Ovary (tissue), 10 donors: ENCODE measurements at regions of chr2 and their contacts with region 1.

Region 1: DNA sequence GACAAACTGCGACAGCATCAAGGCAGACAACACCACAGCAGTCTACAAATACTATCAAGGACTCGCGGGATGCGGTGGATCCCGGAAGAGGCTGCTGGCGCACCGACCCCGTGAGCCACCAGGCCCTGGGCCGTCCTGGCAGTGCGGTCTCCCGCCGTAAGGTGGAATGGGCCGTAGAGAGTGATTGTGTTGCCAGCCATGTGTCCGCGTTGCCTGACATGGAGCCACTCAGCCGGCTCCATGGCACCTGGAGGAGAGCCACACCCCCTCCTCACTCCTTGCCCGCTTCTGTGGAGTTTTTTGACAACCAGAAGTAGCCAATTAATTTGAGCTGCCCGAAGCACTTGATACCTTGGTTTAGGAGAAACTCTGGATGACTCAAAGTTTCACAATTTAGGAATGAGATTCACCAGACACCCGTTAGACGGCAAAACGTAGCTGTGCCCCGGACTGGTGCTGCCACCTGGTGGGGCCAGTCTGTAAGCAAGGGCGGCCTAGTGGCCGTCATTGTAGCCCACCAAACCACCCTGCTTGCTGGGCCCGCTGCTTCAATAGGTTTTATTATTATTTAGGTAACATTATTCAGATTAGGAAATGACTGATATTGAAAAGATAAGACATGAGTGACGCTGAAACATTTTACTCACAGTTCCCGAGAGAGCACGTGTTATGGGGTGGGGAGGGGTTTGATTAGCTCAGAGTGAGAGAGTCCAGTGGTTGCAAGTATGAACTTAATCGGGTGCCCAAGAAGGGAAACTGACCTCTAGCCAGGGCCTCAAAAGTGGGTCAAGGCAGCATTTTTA is 10.2 kb upstream of the IMP4 start:
- DNase-seq: peak; percentile 80 to 90 (median 85)
- H3K4me3 ChIP-seq: no peak overlapping the region
- H3K27ac ChIP-seq: no peak overlapping the region
- H3K4me1 ChIP-seq: no peaks in the 10 kb centered on the region
- H3K27me3 ChIP-seq: no peaks in the 10 kb centered on the region
- CTCF ChIP-seq: peak; percentile 73 to 94 (median 93)
- EP300 ChIP-seq: no peak
- POLR2A ChIP-seq: no peak

Region 2: GRCh38 chr2:129877289-129877779 is 455.1 kb before region 1 on chr2:
- intact Hi-C with region 1: loop called in 1 of 4 experiments (anchors 5 kb)
- DNase-seq: peak; percentile 91 to 97 (median 95)
- H3K4me3 ChIP-seq: peak overlapping the region; percentile 75
- H3K27ac ChIP-seq: peak overlapping the region in 1 of 2 donors; percentile 67
- H3K4me1 ChIP-seq: peaks cover 3% of the 10 kb centered on the region
- H3K27me3 ChIP-seq: no peaks in the 10 kb centered on the region
- CTCF ChIP-seq: no peak
- EP300 ChIP-seq: no peak
- POLR2A ChIP-seq: peak; percentile 22

Region 3: GRCh38 chr2:130150181-130151144 is 182.0 kb before region 1 on chr2:
- intact Hi-C with region 1: loop called in 2 of 4 experiments (anchors 10 kb)
- DNase-seq: peak in 1 of 5 donors; percentile 27
- H3K4me3 ChIP-seq: no peak overlapping the region
- H3K27ac ChIP-seq: no peak overlapping the region
- H3K4me1 ChIP-seq: no peaks in the 10 kb centered on the region
- H3K27me3 ChIP-seq: no peaks in the 10 kb centered on the region
- CTCF ChIP-seq: no peak
- EP300 ChIP-seq: no peak
- POLR2A ChIP-seq: no peak

Region 4: DNA sequence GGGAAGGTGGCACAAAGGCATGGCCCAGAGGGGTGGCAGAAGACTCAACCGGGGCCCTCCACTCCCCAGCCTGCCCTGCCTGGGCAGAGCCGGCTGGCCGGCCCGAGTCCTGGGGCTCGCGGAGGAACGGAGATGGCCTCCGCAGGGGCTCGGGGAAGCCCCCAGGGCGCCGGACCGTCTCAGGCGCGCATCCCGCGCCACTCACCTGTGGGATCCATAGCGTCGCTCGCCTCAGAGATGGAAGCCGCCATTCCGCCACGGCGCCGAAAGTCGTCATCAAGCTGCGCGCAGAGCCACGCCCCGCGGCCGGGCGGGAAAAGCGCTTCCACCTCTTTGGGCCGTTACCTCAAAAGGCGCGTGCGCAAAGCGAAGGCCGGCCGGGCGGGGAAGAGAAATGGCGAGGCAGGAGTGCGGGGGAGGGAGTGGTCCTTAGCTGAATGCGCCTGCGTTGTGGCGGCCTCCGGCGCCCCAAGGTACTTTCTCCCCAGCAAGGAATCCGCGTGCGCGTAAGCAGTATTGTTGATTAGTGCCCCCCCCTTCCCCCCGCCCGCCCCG is 151.1 kb before region 1 on chr2 and contains the start of gene SMPD4:
- intact Hi-C with region 1: loop called in 2 of 4 experiments (anchors 5 to 10 kb)
- DNase-seq: peak; percentile 98 to 99 (median 98)
- H3K4me3 ChIP-seq: peak within 1 kb of the TSS; percentile 96
- H3K27ac ChIP-seq: peak within 1 kb of the TSS; percentile 87 to 91
- H3K4me1 ChIP-seq: peaks cover 7% of the 10 kb centered on the region
- H3K27me3 ChIP-seq: no peaks in the 10 kb centered on the region
- CTCF ChIP-seq: no peak
- EP300 ChIP-seq: no peak
- POLR2A ChIP-seq: peak; percentile 26
- total RNA-seq, gene SMPD4: 24.7 to 53.2 (median 39.5) TPM

Region 5: DNA sequence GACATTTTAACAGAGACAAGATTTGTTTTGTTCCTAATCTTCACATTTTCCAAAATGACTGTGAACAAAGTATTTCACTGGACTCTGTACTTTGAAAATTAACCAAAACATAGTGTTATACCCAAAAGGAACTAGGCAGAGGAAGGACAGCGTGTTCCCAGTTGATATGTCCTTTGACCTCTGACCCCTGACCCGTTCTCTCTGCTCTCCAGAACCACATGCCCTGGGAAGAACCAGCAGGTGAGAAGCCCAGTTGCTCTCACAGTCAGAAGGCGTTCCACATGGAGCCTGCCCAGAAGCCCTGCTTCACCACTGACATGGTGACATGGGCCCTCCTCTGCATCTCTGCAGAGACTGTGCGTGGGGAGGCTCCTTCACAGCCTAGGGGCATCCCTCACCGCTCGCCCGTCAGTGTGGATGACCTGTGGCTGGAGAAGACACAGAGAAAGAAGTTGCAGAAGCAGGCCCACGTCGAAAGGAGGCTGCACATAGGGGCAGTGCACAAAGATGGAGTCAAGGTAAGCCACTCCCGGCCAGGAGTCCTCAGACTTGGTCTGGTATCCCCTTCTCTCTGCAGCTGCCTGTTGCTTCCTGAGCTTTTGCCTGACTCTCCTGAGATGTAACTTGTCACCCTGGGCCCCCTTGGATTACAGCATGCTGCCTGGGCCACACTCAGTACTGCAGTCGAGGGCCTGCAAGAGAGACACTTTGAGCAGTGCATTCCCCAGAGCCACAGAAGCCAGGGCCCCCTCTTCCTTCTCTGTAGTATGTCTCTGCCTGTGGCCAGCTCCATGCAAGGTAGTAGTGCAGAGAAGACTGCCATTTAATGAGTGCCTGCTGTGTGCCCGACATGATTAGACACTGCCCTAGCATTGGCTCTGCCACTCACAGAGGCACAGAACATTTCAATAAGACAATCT is 598.5 kb after region 1 on chr2:
- intact Hi-C with region 1: no loop called
- DNase-seq: peak in 2 of 5 donors; percentile 68 to 75
- H3K4me3 ChIP-seq: no peak overlapping the region
- H3K27ac ChIP-seq: no peak overlapping the region
- H3K4me1 ChIP-seq: no peaks in the 10 kb centered on the region
- H3K27me3 ChIP-seq: no peaks in the 10 kb centered on the region
- CTCF ChIP-seq: no peak
- EP300 ChIP-seq: no peak
- POLR2A ChIP-seq: no peak